Ascending aorta (tissue), 2 donors: ENCODE measurements at regions of chr1 and their contacts with region 1.

Region 1: GRCh38 chr1:115089420-115090185 is at the start of gene TSPAN2:
- DNase-seq: peak; percentile 79 to 95
- H3K4me3 ChIP-seq: peak within 1 kb of the TSS; percentile 84 to 90
- H3K27ac ChIP-seq: peak within 1 kb of the TSS; percentile 95 to 99
- H3K4me1 ChIP-seq: peaks cover 4 to 27% of the 10 kb centered on the region in 2 donors
- H3K27me3 ChIP-seq: no peaks in the 10 kb centered on the region
- CTCF ChIP-seq: peak; percentile 2 to 61 (median 53)
- total RNA-seq, gene TSPAN2: 10.9 TPM

Region 2: GRCh38 chr1:115068826-115069572 is 20.6 kb before region 1 on chr1:
- intact Hi-C with region 1: loop called (anchors 2 kb)
- DNase-seq: peak; percentile 46 to 83
- H3K4me3 ChIP-seq: no peak overlapping the region
- H3K27ac ChIP-seq: peak overlapping the region; percentile 84 to 86
- H3K4me1 ChIP-seq: peaks cover 12 to 50% of the 10 kb centered on the region in 2 donors
- H3K27me3 ChIP-seq: no peaks in the 10 kb centered on the region
- CTCF ChIP-seq: peak in 1 of 3 experiments; percentile 23

Region 3: DNA sequence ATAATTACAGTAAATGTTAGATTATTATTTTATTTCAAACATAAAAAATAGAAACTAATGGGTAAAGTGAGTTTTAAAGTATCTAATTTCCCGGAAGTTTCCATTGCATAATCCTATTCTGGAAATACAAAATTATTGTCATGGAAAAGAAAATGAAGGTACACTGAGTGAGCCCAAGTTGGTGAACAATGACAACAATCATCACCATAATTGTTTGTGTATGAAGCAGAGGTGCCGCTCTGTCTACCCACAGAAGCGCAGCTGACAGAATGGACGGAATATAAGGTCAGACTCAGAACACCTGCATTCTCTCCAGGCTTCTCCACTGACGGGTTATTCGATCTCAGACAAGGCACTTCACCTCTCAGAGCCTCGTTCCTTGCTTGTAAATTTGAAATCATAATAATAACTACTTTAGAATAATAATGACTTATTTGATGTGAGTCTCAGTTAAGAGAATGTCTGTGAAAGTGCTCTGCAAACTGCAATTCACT is 347.6 kb after region 1 on chr1:
- intact Hi-C with region 1: no loop called
- DNase-seq: no peak
- H3K4me3 ChIP-seq: no peak overlapping the region
- H3K27ac ChIP-seq: no peak overlapping the region
- H3K4me1 ChIP-seq: peaks cover 0 to 3% of the 10 kb centered on the region in 2 donors
- H3K27me3 ChIP-seq: no peaks in the 10 kb centered on the region
- CTCF ChIP-seq: no peak